ENCODE measurements at regions of chr6 and their contacts with region 1.

Region 1: DNA sequence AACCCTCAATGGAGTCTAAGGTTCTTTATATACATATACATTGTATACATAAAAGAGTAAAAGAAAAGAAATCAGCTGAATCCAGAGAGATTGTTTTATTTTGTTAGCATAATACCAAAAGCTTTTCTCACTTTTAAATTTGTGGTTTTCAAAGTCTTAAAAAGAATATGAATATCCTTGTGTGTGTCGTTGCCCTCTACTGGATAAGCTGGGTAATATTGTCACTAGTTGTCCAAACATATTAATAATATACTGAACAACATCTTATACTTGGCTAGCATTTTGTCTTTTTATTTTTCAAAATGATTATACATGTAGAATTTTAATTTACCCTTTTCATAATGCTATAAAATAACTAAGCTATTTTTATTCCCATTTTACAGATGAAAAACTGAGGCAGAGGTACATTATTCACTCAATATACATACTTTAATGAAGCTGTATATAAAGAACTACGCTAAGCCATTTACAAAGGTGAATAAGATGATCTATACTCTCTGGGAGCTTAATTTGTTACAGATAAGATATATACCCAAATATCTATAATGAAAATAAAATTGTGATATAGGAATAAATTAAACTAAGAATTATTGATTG is 531.7 kb downstream of the TFAP2B start:
- H3K4me3 Mint-ChIP-seq: no peak overlapping the region
- H3K27ac Mint-ChIP-seq: no peak overlapping the region
- H3K4me1 Mint-ChIP-seq: no peaks in the 10 kb centered on the region
- H3K27me3 Mint-ChIP-seq: peaks cover 14% of the 10 kb centered on the region

Region 2: GRCh38 chr6:51410453-51410852 is 60.0 kb after region 1 on chr6:
- intact Hi-C with region 1: no loop called
- H3K4me3 Mint-ChIP-seq: no peak overlapping the region
- H3K27ac Mint-ChIP-seq: no peak overlapping the region
- H3K4me1 Mint-ChIP-seq: no peaks in the 10 kb centered on the region
- H3K27me3 Mint-ChIP-seq: no peaks in the 10 kb centered on the region

Region 3: DNA sequence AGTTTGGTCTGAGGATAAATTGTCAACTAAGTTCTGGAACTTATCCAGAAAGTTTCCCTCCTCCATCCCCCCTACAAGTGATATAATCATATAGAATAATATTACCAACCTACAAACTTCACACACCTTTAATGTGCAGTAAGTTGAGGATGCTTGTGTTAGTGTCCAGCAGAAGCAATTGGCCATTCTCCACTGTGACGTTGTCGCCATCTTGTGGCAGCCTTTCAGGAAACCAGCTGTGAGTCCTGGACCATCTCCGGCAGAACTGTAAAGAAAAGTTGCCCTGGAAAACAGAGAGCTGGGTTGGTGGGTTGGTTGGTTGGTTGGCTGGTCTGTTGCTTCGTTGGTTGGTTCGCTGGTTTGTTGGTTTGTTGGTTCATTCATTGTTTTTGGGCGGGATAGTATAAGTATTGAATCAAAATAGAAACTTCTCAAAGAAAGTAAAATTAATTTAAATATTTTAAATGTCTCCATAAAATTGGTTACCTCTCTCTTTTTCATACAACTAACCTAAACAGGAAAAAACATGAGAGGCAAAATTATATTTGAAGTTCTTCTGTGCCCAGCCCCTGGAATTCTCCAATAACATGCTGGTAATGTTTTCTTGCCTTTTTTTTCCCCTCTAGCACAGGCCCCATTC is 609.5 kb after region 1 on chr6:
- intact Hi-C with region 1: loop called (anchors 10 kb)
- H3K4me3 Mint-ChIP-seq: no peak overlapping the region
- H3K27ac Mint-ChIP-seq: no peak overlapping the region
- H3K4me1 Mint-ChIP-seq: no peaks in the 10 kb centered on the region
- H3K27me3 Mint-ChIP-seq: peaks cover 1% of the 10 kb centered on the region

Measured in dendritic cell treated with granulocyte-macrophage colony-stimulating factor and Interleukin-4, amounts not matched to agents 40 ng/mL and 50 ng/mL, for 4 days (primary cell).